B cell (primary cell): ENCODE measurements at regions of chr18 and their contacts with region 1.

Region 1: GRCh38 chr18:67217551-67218166 is 298.9 kb downstream of the DSEL start:
- DNase-seq: peak; percentile 62
- ATAC-seq: peak; percentile 53
- H3K4me3 ChIP-seq: no peak overlapping the region
- H3K4me3 Mint-ChIP-seq: no peak overlapping the region
- H3K27ac ChIP-seq: no peak overlapping the region
- H3K27ac Mint-ChIP-seq: no peak overlapping the region
- H3K4me1 ChIP-seq: no peaks in the 10 kb centered on the region
- H3K4me1 Mint-ChIP-seq: no peaks in the 10 kb centered on the region
- H3K27me3 ChIP-seq: no peaks in the 10 kb centered on the region
- H3K27me3 Mint-ChIP-seq: no peaks in the 10 kb centered on the region
- CTCF ChIP-seq: peak; percentile 89

Region 2: GRCh38 chr18:67515945-67516538 is 298.4 kb after region 1 on chr18:
- CTCF ChIA-PET with region 1: interaction called, 12 read pairs
- POLR2A ChIA-PET with region 1: no interaction called
- intact Hi-C with region 1: loop called (anchors 1 kb)
- DNase-seq: peak; percentile 74
- ATAC-seq: no peak
- H3K4me3 ChIP-seq: peak overlapping the region; percentile 42 to 76 (median 71)
- H3K4me3 Mint-ChIP-seq: peak overlapping the region; percentile 93
- H3K27ac ChIP-seq: no peak overlapping the region
- H3K27ac Mint-ChIP-seq: peak overlapping the region; percentile 34
- H3K4me1 ChIP-seq: peaks cover 6 to 17% of the 10 kb centered on the region in 2 donors
- H3K4me1 Mint-ChIP-seq: peaks cover 20% of the 10 kb centered on the region
- H3K27me3 ChIP-seq: peaks cover 0 to 19% (median 15%) of the 10 kb centered on the region in 4 experiments
- H3K27me3 Mint-ChIP-seq: peaks cover 11% of the 10 kb centered on the region
- CTCF ChIP-seq: peak; percentile 29

Region 3: GRCh38 chr18:68623342-68623741 is 1405.7 kb after region 1 on chr18:
- CTCF ChIA-PET with region 1: interaction called, 4 read pairs
- POLR2A ChIA-PET with region 1: no interaction called
- intact Hi-C with region 1: loop called (anchors 1 kb)
- DNase-seq: peak; percentile 8
- ATAC-seq: no peak
- H3K4me3 ChIP-seq: no peak overlapping the region
- H3K4me3 Mint-ChIP-seq: no peak overlapping the region
- H3K27ac ChIP-seq: no peak overlapping the region
- H3K27ac Mint-ChIP-seq: no peak overlapping the region
- H3K4me1 ChIP-seq: no peaks in the 10 kb centered on the region
- H3K4me1 Mint-ChIP-seq: no peaks in the 10 kb centered on the region
- H3K27me3 ChIP-seq: no peaks in the 10 kb centered on the region
- H3K27me3 Mint-ChIP-seq: no peaks in the 10 kb centered on the region
- CTCF ChIP-seq: peak; percentile 29